ENCODE measurements at regions of chr12 and their contacts with region 1.

Region 1: GRCh38 chr12:737122-737739 is 15.1 kb upstream of the WNK1 start:
- DNase-seq: no peak
- H3K4me3 Mint-ChIP-seq: no peak overlapping the region
- H3K27ac Mint-ChIP-seq: no peak overlapping the region
- H3K4me1 Mint-ChIP-seq: no peaks in the 10 kb centered on the region
- H3K27me3 Mint-ChIP-seq: no peaks in the 10 kb centered on the region
- CTCF ChIP-seq: no peak

Region 2: DNA sequence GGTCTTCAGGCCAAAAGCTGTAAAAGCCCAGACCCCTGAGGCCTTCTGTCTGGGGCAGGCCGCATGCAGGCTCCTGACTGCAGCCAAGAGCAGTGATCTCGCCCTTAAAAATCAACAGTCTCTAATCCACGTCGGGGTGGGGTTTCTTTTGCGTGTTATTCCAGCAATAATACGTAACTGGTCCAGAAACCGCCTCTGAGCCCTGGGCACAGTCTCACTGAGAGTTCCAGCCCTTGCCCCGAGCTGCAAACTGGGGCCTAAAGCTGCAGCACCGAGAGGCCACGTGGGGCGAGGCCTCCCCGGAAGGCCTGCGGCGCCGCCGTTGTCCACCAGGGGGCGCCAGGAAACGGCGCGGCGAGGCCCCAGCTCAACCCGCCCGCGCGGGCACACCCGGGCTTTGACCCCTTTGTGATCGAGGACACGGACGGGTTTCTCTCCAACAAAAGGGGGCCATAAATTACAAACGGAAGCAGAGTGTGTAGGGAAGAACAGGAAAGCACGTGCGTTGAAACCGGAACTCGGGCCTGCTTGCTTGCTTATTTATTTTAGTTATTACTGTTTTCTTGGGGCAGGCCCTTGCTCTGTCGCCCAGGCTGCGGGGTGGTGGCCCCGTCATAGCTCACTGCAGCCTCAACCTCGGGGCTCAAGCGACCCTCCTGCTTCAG is 161.2 kb before region 1 on chr12:
- CTCF ChIA-PET with region 1: interaction called, 10 read pairs
- POLR2A ChIA-PET with region 1: no interaction called
- intact Hi-C with region 1: no loop called
- DNase-seq: peak; percentile 78
- H3K4me3 Mint-ChIP-seq: peak overlapping the region; percentile 35
- H3K27ac Mint-ChIP-seq: peak overlapping the region; percentile 91
- H3K4me1 Mint-ChIP-seq: peaks cover 44% of the 10 kb centered on the region
- H3K27me3 Mint-ChIP-seq: no peaks in the 10 kb centered on the region
- CTCF ChIP-seq: peak; percentile 99

Region 3: DNA sequence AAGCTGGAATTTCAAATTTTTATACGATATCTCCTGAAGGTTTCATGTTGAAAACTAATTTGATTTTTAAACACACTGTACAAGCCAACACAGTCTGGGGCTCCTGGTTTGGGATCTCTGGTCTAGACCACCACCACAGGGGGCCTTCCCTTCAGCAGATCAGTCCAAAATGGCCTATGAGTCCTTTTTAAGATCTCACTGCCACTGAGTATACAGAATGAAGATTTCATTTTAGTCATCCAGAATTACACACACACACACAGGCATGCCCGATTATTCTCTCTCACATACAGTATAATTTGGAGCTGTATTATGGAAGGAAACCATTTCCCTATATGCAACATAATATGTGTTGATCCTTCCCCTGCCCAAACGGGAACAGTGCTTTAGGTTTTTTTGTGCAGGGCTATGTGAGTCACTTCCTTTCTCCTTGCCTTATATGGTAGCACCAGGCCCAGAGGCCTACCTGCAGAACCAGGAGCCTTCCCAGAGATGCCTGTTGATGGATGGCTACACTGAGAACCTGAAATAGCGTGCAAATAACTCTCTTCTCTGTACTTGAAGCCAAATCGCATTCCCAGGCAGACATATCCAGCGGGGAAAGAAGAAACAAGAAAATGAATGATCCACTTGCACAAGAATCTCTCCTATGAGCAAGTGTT is 12.9 kb before region 1 on chr12:
- CTCF ChIA-PET with region 1: interaction called, 6 read pairs
- POLR2A ChIA-PET with region 1: interaction called, 19 read pairs
- intact Hi-C with region 1: no loop called
- DNase-seq: peak; percentile 68
- H3K4me3 Mint-ChIP-seq: no peak overlapping the region
- H3K27ac Mint-ChIP-seq: peak overlapping the region; percentile 74
- H3K4me1 Mint-ChIP-seq: peaks cover 30% of the 10 kb centered on the region
- H3K27me3 Mint-ChIP-seq: no peaks in the 10 kb centered on the region
- CTCF ChIP-seq: no peak

Measured in MCF 10A (cell line).